ENCODE measurements at regions of chr1 and their contacts with region 1.

Region 1: GRCh38 chr1:225772323-225772768 is 5.3 kb upstream of the SRP9 start:
- DNase-seq: peak; percentile 92

Region 2: DNA sequence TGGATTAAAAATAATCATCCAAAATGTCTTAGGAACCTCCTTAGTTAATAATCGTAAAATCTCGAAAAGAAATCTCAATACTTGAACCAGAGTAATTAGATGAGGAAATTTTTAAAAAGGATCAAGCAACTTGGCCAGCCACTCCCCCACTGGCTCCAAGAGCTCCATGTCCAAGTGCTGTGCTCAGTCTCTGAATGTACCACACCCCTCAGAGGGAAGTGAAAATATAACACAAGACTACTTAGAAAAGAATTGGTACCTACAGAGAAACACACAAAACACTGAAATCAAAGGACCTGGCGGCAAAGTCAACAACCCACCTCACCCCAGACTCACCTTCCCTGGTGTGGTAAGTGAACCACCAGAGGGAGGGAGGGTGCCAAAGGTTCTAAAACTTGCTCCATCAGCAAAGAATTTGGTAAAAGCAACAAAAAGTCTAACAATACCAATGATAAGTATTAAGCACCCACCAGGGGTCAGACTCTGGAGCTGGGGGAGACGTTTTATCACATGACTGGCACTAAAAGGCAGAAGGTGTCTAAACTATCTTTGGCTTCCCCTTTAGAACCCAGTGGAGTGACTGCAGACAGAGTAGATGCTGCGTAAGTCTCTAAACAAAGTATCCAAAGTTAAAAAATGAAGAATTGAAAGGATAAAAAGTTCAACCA is 358.5 kb before region 1 on chr1:
- CTCF ChIA-PET with region 1: no interaction called
- POLR2A ChIA-PET with region 1: no interaction called
- DNase-seq: no peak

Region 3: GRCh38 chr1:225480825-225481434 is 291.4 kb before region 1 on chr1:
- CTCF ChIA-PET with region 1: interaction called, 25 read pairs
- POLR2A ChIA-PET with region 1: interaction called, 25 read pairs
- DNase-seq: peak; percentile 84

Region 4: DNA sequence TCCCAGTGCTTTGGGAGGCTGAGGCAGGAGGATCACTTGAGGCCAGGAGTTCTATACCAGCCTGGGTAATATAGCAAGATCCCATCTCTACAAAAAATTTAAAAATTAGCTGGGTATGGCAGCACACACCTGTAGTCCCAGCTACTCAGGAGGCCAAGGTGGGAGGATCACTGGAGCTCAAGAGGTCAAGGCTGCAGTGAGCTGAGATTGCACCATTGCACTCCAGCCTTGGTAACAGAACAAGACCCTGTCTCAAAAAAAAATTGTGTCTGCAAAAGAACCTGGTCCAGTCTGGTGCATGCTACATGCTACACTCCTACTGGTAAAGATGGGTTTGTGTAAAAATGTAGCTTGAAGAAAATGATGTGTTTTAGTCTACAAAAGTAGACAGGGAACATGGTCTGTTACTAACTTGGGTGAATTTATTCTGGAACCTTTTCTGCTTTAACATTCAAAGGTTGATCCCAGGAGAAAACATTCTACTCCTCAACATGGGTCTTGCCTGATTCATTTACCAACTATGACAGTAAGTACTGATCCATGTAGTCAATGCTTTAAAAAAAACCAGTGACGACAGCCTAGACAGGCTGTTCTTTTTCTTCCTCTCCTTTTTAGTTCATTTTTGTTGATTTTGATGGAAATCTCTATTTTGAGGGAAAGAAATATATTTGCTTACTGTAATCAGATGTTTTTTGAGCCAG is 86.7 kb before region 1 on chr1:
- CTCF ChIA-PET with region 1: no interaction called
- POLR2A ChIA-PET with region 1: no interaction called
- DNase-seq: no peak

Measured in HEK293T (cell line).